ENCODE measurements at regions of chr10 and their contacts with region 1.

Region 1: GRCh38 chr10:117216611-117217195 is 19.4 kb downstream of the KCNK18 start:
- DNase-seq: peak; percentile 62
- H3K4me3 Mint-ChIP-seq: peak overlapping the region; percentile 78
- H3K27ac Mint-ChIP-seq: no peak overlapping the region
- H3K4me1 Mint-ChIP-seq: no peaks in the 10 kb centered on the region
- H3K27me3 Mint-ChIP-seq: peaks cover 34% of the 10 kb centered on the region
- CTCF ChIP-seq: peak; percentile 100

Region 2: GRCh38 chr10:116783011-116783655 is 433.6 kb before region 1 on chr10:
- CTCF ChIA-PET with region 1: no interaction called
- POLR2A ChIA-PET with region 1: no interaction called
- intact Hi-C with region 1: no loop called
- DNase-seq: peak; percentile 59
- H3K4me3 Mint-ChIP-seq: no peak overlapping the region
- H3K27ac Mint-ChIP-seq: no peak overlapping the region
- H3K4me1 Mint-ChIP-seq: peaks cover 20% of the 10 kb centered on the region
- H3K27me3 Mint-ChIP-seq: no peaks in the 10 kb centered on the region
- CTCF ChIP-seq: no peak

Region 3: GRCh38 chr10:117186832-117187615 is 29.7 kb before region 1 on chr10:
- CTCF ChIA-PET with region 1: interaction called, 16 read pairs
- POLR2A ChIA-PET with region 1: no interaction called
- intact Hi-C with region 1: no loop called
- DNase-seq: peak; percentile 79
- H3K4me3 Mint-ChIP-seq: no peak overlapping the region
- H3K27ac Mint-ChIP-seq: peak overlapping the region; percentile 3
- H3K4me1 Mint-ChIP-seq: peaks cover 8% of the 10 kb centered on the region
- H3K27me3 Mint-ChIP-seq: no peaks in the 10 kb centered on the region
- CTCF ChIP-seq: no peak

Region 4: DNA sequence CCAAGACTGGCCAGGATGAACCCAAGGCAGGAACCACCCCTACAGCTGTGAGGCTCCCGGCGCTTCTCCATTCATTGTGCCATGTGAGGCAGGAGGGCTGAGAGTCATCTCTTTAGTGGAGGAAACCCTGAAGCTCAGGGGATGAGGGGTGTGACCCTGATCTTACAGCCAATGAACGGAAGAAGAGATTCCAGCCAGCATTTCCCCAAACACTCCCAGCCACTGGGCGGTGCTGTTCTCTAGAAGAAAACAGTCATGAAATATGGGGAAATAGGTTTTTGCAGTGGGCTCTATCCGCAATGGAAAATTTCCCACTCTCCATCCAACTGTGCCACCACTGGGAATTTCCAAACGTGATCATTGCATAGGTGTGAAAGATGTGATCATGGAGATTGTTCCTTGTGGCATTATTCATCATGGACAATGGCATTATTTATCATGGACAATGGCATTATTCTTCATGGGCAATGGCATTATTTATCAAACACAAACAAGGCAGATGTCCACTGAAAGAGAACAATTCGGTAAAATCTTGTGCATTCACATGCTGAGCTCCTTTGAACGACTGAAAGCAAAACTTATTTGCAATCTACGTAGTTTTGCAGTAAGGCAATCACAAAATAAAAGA is 10.2 kb after region 1 on chr10:
- CTCF ChIA-PET with region 1: interaction called, 26 read pairs
- POLR2A ChIA-PET with region 1: interaction called, 3 read pairs
- intact Hi-C with region 1: no loop called
- DNase-seq: peak; percentile 64
- H3K4me3 Mint-ChIP-seq: no peak overlapping the region
- H3K27ac Mint-ChIP-seq: no peak overlapping the region
- H3K4me1 Mint-ChIP-seq: no peaks in the 10 kb centered on the region
- H3K27me3 Mint-ChIP-seq: peaks cover 55% of the 10 kb centered on the region
- CTCF ChIP-seq: peak; percentile 38

Region 5: DNA sequence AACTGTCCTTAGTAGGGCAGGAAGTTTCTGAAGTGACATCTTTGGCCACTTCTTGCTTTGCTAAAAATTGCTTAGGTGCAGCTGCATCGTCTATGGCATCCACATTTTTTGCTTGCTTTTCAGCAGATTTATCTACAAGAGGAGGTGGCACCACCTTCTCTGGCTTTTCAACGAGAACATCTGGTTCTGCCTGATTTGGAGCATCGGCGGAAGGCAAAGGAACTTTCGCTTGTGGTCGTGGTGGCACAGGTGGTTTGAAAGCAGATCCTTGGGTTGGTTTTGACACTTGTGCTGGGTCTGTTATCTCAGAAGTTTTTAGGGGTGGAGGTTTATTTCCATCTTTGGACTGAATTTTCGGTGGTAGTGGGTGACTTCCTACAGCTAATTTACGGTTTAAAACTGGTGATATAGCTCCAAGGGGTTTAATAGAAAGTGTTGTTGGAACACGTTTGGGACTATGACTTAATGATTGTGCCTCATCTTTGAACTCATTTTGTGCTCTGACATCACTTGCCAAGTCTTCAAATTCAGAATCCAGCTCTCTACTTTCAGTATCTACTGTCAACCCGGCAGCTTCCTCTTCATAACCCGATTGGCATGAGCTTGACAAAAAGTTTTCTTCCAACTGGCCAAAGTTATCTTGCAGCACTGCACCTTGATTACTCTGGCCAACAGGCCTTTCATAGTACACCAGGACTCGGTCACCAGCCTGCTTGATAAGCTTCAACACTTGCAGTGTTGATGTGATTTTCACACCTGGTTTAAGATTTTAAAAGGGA is 68.2 kb after region 1 on chr10:
- CTCF ChIA-PET with region 1: interaction called, 26 read pairs
- POLR2A ChIA-PET with region 1: no interaction called
- intact Hi-C with region 1: no loop called
- DNase-seq: no peak
- H3K4me3 Mint-ChIP-seq: no peak overlapping the region
- H3K27ac Mint-ChIP-seq: no peak overlapping the region
- H3K4me1 Mint-ChIP-seq: no peaks in the 10 kb centered on the region
- H3K27me3 Mint-ChIP-seq: no peaks in the 10 kb centered on the region
- CTCF ChIP-seq: no peak

Region 6: GRCh38 chr10:117311261-117311660 is 94.6 kb after region 1 on chr10:
- CTCF ChIA-PET with region 1: interaction called, 170 read pairs
- POLR2A ChIA-PET with region 1: interaction called, 53 read pairs
- intact Hi-C with region 1: no loop called
- DNase-seq: no peak
- H3K4me3 Mint-ChIP-seq: no peak overlapping the region
- H3K27ac Mint-ChIP-seq: no peak overlapping the region
- H3K4me1 Mint-ChIP-seq: peaks cover 10% of the 10 kb centered on the region
- H3K27me3 Mint-ChIP-seq: no peaks in the 10 kb centered on the region
- CTCF ChIP-seq: no peak

Region 7: GRCh38 chr10:117334066-117334465 is 117.4 kb after region 1 on chr10:
- CTCF ChIA-PET with region 1: interaction called, 13 read pairs
- POLR2A ChIA-PET with region 1: no interaction called
- intact Hi-C with region 1: no loop called
- DNase-seq: no peak
- H3K4me3 Mint-ChIP-seq: no peak overlapping the region
- H3K27ac Mint-ChIP-seq: no peak overlapping the region
- H3K4me1 Mint-ChIP-seq: peaks cover 7% of the 10 kb centered on the region
- H3K27me3 Mint-ChIP-seq: no peaks in the 10 kb centered on the region
- CTCF ChIP-seq: no peak

Region 8: GRCh38 chr10:118241229-118242137 is 1024.8 kb after region 1 on chr10:
- CTCF ChIA-PET with region 1: interaction called, 7 read pairs
- POLR2A ChIA-PET with region 1: no interaction called
- intact Hi-C with region 1: loop called (anchors 5 kb)
- DNase-seq: peak; percentile 86
- H3K4me3 Mint-ChIP-seq: peak overlapping the region; percentile 25
- H3K27ac Mint-ChIP-seq: no peak overlapping the region
- H3K4me1 Mint-ChIP-seq: no peaks in the 10 kb centered on the region
- H3K27me3 Mint-ChIP-seq: peaks cover 73% of the 10 kb centered on the region
- CTCF ChIP-seq: peak; percentile 96